AG04449 (cell line): ENCODE measurements at regions of chr17 and their contacts with region 1.

Region 1: GRCh38 chr17:39621523-39622379 is 5.0 kb upstream of the PPP1R1B start:
- DNase-seq: no peak
- H3K4me3 ChIP-seq: peak overlapping the region; percentile 8; the same call in 1 of the 2 replicates
- CTCF ChIP-seq: peak; percentile 100

Region 2: GRCh38 chr17:39538866-39539265 is 82.9 kb before region 1 on chr17:
- CTCF ChIA-PET with region 1: interaction called, 781 read pairs
- POLR2A ChIA-PET with region 1: no interaction called
- DNase-seq: no peak
- H3K4me3 ChIP-seq: no peak overlapping the region
- CTCF ChIP-seq: no peak

Region 3: DNA sequence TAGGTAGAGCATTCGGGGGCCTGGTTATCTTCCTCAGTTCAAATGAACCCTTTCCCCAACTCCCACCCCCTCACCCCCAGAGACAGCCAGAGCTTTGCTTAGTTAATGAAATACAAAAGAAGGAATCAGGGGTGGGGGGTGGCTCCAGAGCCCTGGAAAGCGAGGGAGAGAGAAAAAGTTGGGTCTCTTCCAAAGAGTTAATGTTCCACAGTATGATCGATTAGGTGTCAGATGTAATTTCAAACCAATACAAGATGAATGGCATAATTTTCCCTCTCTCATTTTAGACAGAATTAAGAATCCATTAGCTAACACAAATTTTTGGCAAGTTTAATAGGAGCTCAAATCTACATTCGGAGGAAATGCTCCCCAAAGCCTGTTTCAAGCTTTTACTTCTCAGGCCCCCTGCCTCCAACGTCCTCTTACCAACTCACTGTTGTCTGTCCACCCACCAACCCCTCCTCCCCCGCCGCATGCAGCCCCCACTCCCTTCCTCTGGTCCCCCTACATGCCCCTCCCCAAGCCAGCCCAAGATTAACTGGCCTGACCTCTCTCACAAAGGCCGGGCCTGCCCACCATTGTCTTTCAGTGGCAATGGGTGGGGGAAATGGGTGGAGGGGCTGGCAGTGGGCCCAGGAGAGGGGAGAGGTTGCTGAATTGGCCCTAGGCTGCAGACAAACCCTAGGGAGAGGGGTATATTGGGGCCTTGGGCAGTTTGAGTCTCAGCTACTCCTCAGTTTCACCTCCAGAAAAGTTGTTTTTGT is 42.3 kb before region 1 on chr17:
- CTCF ChIA-PET with region 1: interaction called, 33 read pairs
- POLR2A ChIA-PET with region 1: no interaction called
- DNase-seq: no peak
- H3K4me3 ChIP-seq: no peak overlapping the region
- CTCF ChIP-seq: no peak

Region 4: GRCh38 chr17:39636927-39637736 is 15.4 kb after region 1 on chr17 and contains the start of gene STARD3:
- CTCF ChIA-PET with region 1: interaction called, 822 read pairs
- POLR2A ChIA-PET with region 1: interaction called, 3 read pairs
- DNase-seq: peak; percentile 33
- H3K4me3 ChIP-seq: peak within 1 kb of the TSS; percentile 93
- CTCF ChIP-seq: peak; percentile 29

Region 5: GRCh38 chr17:39676198-39676819 is 54.6 kb after region 1 on chr17:
- CTCF ChIA-PET with region 1: interaction called, 237 read pairs
- POLR2A ChIA-PET with region 1: no interaction called
- DNase-seq: no peak
- H3K4me3 ChIP-seq: no peak overlapping the region
- CTCF ChIP-seq: no peak

Region 6: GRCh38 chr17:39730095-39730921 is 108.6 kb after region 1 on chr17 and contains the start of gene MIEN1:
- CTCF ChIA-PET with region 1: interaction called, 51 read pairs
- POLR2A ChIA-PET with region 1: no interaction called
- DNase-seq: no peak
- H3K4me3 ChIP-seq: peak within 1 kb of the TSS; percentile 76
- CTCF ChIP-seq: peak; percentile 84